CD4-positive, alpha-beta T cell (primary cell): ENCODE measurements at regions of chr17 and their contacts with region 1.

Region 1: DNA sequence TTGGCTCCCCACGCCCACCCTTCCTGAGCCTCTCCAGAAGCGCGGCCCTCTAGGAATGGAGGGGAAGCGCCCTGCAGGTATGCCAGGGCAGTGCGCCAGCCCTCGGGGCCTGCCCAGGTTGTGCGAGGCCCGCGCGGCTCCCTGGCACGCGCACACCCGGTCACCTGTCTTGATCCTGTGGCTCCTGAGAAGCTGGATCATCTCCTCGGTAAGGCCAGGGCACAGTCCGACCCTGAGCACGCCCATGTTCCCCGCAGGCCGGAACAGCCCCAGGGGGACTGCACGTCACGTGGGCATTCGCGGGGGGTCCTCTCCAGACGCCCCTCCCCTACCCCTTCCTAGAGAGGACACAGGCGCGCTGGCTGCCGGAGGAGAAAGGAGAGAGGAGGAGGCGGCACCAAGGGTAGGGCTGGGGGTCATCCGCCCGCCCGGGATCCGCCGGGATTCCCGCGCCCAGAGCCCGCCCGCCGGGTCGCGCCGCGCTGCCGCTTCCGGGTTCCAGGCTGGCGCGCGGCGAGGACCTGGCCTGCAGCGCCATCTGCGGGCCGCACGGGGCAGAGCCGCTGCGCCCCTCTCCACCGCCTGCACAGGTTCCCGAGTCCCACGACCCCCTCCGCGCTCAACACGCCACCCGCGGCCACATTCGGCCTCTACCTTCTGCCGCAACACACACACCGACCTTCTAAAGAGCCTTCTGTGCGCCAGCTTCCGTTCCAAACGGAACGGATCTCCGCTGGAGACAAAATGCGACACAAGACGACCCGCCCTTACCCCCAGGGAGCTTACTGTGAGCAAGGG is at the start of gene RAD51D:
- DNase-seq: peak; percentile 60 to 93 (median 74)
- ATAC-seq: peak; percentile 87
- H3K4me3 ChIP-seq: peak within 1 kb of the TSS; percentile 98
- H3K4me3 Mint-ChIP-seq: peak within 1 kb of the TSS; percentile 97
- H3K27ac ChIP-seq: peak within 1 kb of the TSS; percentile 56 to 60
- H3K27ac Mint-ChIP-seq: peak within 1 kb of the TSS; percentile 88
- H3K4me1 ChIP-seq: peaks cover 34% of the 10 kb centered on the region
- H3K4me1 Mint-ChIP-seq: peaks cover 34% of the 10 kb centered on the region
- H3K27me3 ChIP-seq: no peaks in the 10 kb centered on the region
- H3K27me3 Mint-ChIP-seq: no peaks in the 10 kb centered on the region
- CTCF ChIP-seq: peak; percentile 67
- total RNA-seq, gene RAD51D: 6.2 to 8.6 TPM

Region 2: DNA sequence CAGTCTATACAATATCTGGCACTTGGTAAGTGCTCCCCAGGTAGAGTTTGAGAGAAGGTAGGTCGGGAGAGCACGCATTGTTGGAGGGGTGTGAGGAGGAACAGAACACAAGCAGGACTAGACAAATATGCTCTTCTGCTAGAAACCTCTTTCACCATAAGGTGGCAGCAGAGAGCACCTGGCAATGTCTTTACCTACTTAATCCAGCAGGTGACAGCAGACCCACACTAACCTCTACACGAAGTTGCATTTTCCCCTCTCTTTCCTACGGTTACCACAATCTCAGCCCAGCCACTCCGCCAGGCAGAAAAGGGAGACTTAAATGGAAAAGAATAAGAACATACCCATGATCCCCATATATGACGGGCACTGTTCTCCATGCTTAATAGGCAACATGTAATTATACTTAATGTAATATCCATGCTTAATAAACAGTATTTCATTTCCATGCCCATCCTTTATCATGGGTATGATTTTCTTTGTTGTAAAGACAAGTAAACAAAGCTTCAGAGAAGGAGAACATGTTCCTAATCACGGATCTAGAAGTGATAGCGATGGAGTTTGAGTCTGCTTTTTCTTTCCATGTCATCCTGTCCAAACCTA is 919.5 kb before region 1 on chr17:
- CTCF ChIA-PET with region 1: no interaction called
- POLR2A ChIA-PET with region 1: no interaction called
- intact Hi-C with region 1: loop called in 1 of 2 experiments (anchors 2 kb)
- DNase-seq: peak; percentile 37 to 85 (median 56)
- ATAC-seq: peak; percentile 94
- H3K4me3 ChIP-seq: no peak overlapping the region
- H3K4me3 Mint-ChIP-seq: no peak overlapping the region
- H3K27ac ChIP-seq: no peak overlapping the region
- H3K27ac Mint-ChIP-seq: no peak overlapping the region
- H3K4me1 ChIP-seq: no peaks in the 10 kb centered on the region
- H3K4me1 Mint-ChIP-seq: peaks cover 6% of the 10 kb centered on the region
- H3K27me3 ChIP-seq: peaks cover 0 to 23% of the 10 kb centered on the region in 2 experiments
- H3K27me3 Mint-ChIP-seq: peaks cover 15% of the 10 kb centered on the region
- CTCF ChIP-seq: peak; percentile 100

Region 3: DNA sequence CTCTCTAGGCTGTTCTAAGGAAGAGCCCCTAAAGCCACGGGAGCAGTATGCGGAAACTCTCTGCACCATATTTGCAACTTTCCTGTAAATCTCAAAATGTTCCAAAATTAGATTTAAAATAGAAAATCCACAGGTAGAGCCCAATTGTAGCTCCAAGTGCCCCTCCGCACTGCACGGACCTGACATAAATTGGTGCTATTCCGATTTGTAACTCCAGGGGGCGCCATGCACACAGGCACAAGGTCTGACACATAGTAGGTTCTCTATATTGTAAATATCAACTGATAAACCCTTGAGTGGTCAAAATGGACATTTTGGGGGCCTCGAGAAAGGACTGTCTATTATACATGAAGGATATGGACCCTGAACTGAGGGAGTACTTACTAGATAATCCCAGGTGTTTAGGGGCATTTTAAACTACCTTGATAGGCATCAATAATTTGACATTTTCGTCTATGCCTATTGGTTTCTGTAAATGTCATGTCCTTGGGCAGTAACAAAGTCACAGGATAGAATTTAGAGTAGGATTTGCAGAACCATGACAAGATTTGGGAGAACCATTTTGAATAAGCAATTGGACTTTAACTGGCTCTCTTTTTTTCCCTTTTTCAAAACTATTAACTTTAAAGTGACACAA is 576.7 kb before region 1 on chr17:
- CTCF ChIA-PET with region 1: interaction called, 21 read pairs
- POLR2A ChIA-PET with region 1: interaction called, 3 read pairs
- intact Hi-C with region 1: loop called (anchors 1 kb)
- DNase-seq: peak; percentile 29 to 75 (median 50)
- ATAC-seq: no peak
- H3K4me3 ChIP-seq: no peak overlapping the region
- H3K4me3 Mint-ChIP-seq: no peak overlapping the region
- H3K27ac ChIP-seq: no peak overlapping the region
- H3K27ac Mint-ChIP-seq: no peak overlapping the region
- H3K4me1 ChIP-seq: no peaks in the 10 kb centered on the region
- H3K4me1 Mint-ChIP-seq: no peaks in the 10 kb centered on the region
- H3K27me3 ChIP-seq: peaks cover 0 to 4% of the 10 kb centered on the region in 2 experiments
- H3K27me3 Mint-ChIP-seq: peaks cover 59% of the 10 kb centered on the region
- CTCF ChIP-seq: peak; percentile 88

Region 4: GRCh38 chr17:34584805-34585416 is 534.7 kb before region 1 on chr17:
- CTCF ChIA-PET with region 1: no interaction called
- POLR2A ChIA-PET with region 1: no interaction called
- intact Hi-C with region 1: loop called in 1 of 2 experiments (anchors 5 kb)
- DNase-seq: peak in 3 of 14 experiments; percentile 27 to 40 (median 29)
- ATAC-seq: peak; percentile 17
- H3K4me3 ChIP-seq: no peak overlapping the region
- H3K4me3 Mint-ChIP-seq: no peak overlapping the region
- H3K27ac ChIP-seq: no peak overlapping the region
- H3K27ac Mint-ChIP-seq: no peak overlapping the region
- H3K4me1 ChIP-seq: peaks cover 23% of the 10 kb centered on the region
- H3K4me1 Mint-ChIP-seq: no peaks in the 10 kb centered on the region
- H3K27me3 ChIP-seq: peaks cover 53 to 64% of the 10 kb centered on the region in 2 experiments
- H3K27me3 Mint-ChIP-seq: peaks cover 64% of the 10 kb centered on the region
- CTCF ChIP-seq: no peak

Region 5: GRCh38 chr17:34980681-34981537 is 138.7 kb before region 1 on chr17:
- CTCF ChIA-PET with region 1: interaction called, 11 read pairs
- POLR2A ChIA-PET with region 1: interaction called, 3 read pairs
- intact Hi-C with region 1: no loop called
- DNase-seq: peak; percentile 38 to 91 (median 66)
- ATAC-seq: peak; percentile 80
- H3K4me3 ChIP-seq: peak overlapping the region; percentile 90
- H3K4me3 Mint-ChIP-seq: peak overlapping the region; percentile 94
- H3K27ac ChIP-seq: peak overlapping the region; percentile 92 to 97
- H3K27ac Mint-ChIP-seq: peak overlapping the region; percentile 88
- H3K4me1 ChIP-seq: peaks cover 26% of the 10 kb centered on the region
- H3K4me1 Mint-ChIP-seq: peaks cover 56% of the 10 kb centered on the region
- H3K27me3 ChIP-seq: no peaks in the 10 kb centered on the region
- H3K27me3 Mint-ChIP-seq: no peaks in the 10 kb centered on the region
- CTCF ChIP-seq: peak; percentile 56

Region 6: GRCh38 chr17:35022536-35023063 is 97.0 kb before region 1 on chr17:
- CTCF ChIA-PET with region 1: interaction called, 13 read pairs
- POLR2A ChIA-PET with region 1: no interaction called
- intact Hi-C with region 1: no loop called
- DNase-seq: peak; percentile 37 to 88 (median 72)
- ATAC-seq: peak; percentile 97
- H3K4me3 ChIP-seq: peak overlapping the region; percentile 15
- H3K4me3 Mint-ChIP-seq: peak overlapping the region; percentile 12
- H3K27ac ChIP-seq: peak overlapping the region; percentile 84 to 87
- H3K27ac Mint-ChIP-seq: peak overlapping the region; percentile 95
- H3K4me1 ChIP-seq: peaks cover 35% of the 10 kb centered on the region
- H3K4me1 Mint-ChIP-seq: peaks cover 63% of the 10 kb centered on the region
- H3K27me3 ChIP-seq: no peaks in the 10 kb centered on the region
- H3K27me3 Mint-ChIP-seq: no peaks in the 10 kb centered on the region
- CTCF ChIP-seq: no peak

Region 7: DNA sequence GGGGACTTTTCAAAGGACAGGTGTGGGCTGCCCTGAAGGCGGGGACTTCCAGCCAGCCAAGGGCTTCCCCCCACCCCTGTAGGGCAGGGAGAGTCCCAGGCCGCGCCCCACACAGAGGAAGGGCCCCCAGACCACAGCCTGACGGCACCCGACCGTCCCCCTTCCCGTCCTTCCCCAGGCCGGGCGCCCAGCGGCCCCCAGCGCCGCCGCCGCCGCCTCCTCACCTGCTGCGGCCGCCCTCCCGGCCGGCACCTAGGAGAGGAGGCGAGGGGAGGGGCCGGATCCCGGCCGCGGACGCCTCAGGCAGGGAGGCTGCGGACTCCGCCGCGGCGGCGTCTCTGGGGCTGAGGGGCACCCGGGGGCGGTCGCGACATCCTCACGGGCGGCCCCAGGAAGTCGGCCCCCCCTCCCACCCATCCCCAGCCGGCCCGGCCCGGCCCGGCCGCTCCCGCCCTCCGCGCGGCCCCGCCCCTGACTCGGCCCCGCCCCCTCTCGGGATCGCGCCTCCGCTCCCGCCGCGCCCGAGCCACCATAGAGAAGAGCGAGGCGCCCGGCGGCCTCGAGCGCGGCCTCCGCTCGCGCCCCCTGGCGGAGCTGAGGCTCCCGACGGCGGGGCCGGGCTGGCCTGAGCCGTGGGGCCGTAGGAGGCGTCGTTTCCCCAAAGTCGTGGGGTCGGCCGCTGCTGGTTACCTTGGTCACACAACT is 30.5 kb before region 1 on chr17:
- CTCF ChIA-PET with region 1: interaction called, 17 read pairs
- POLR2A ChIA-PET with region 1: interaction called, 22 read pairs
- intact Hi-C with region 1: loop called (anchors 1 to 2 kb)
- DNase-seq: peak; percentile 80 to 96 (median 89)
- ATAC-seq: peak; percentile 74
- H3K4me3 ChIP-seq: peak overlapping the region; percentile 92
- H3K4me3 Mint-ChIP-seq: peak overlapping the region; percentile 99
- H3K27ac ChIP-seq: peak overlapping the region; percentile 88 to 94
- H3K27ac Mint-ChIP-seq: peak overlapping the region; percentile 98
- H3K4me1 ChIP-seq: peaks cover 46% of the 10 kb centered on the region
- H3K4me1 Mint-ChIP-seq: peaks cover 58% of the 10 kb centered on the region
- H3K27me3 ChIP-seq: no peaks in the 10 kb centered on the region
- H3K27me3 Mint-ChIP-seq: no peaks in the 10 kb centered on the region
- CTCF ChIP-seq: peak; percentile 72